ENCODE measurements at regions of chr3 and their contacts with region 1.

Region 1: DNA sequence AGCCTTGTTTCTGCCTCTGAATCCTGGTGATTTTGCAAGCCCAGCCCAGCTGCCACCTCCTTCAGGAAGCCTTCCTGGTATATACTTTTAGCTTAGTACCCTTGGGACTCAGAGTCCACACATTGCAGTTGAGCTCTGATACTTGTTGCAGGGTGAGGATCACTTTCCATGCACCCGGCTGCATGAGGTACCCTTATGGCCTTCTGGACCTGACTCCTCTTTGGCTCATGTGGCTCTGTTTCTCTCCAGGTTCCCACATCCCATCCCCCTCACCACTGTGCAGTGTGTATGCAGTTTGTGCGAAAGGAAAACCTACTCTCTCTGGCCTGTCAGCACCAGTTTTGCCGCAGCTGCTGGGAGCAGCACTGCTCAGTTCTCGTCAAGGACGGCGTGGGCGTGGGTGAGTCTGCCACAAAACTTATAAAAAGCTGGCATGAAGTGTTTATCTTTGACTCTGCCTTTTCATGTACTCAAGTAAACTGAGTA is 23.1 kb upstream of the P4HTM start:
- DNase-seq: no peak
- ATAC-seq: peak in 3 of 4 donors; percentile 38 to 42 (median 41)
- H3K4me3 ChIP-seq: no peak overlapping the region
- H3K27ac ChIP-seq: no peak overlapping the region
- H3K4me1 ChIP-seq: no peaks in the 10 kb centered on the region
- H3K27me3 ChIP-seq: no peaks in the 10 kb centered on the region
- CTCF ChIP-seq: no peak
- POLR2A ChIP-seq: no peak

Region 2: DNA sequence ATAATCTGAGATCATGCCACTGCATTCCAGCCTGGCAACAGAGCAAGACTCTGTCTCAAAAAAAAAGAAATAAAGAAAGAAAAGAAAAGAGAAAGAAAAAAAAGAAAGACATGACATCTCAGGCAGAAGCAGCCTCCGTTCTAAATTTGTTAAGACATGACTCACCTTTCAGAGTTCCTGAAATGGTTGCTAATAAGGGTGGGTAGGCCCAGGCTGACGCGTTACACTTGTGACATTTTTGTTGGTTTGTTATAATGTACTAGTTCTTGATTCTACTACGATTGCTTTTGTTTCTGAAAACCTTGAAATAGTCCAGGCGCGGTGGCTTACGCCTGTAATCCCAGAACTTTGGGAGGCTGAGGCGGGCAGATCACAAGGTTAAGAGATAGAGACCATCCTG is 89.2 kb before region 1 on chr3:
- intact Hi-C with region 1: loop called in 1 of 10 experiments (anchors 10 kb)
- DNase-seq: no peak
- ATAC-seq: no peak
- H3K4me3 ChIP-seq: no peak overlapping the region
- H3K27ac ChIP-seq: no peak overlapping the region
- H3K4me1 ChIP-seq: peaks cover 0 to 18% (median 6%) of the 10 kb centered on the region in 12 donors
- H3K27me3 ChIP-seq: no peaks in the 10 kb centered on the region
- CTCF ChIP-seq: no peak
- POLR2A ChIP-seq: no peak

Region 3: DNA sequence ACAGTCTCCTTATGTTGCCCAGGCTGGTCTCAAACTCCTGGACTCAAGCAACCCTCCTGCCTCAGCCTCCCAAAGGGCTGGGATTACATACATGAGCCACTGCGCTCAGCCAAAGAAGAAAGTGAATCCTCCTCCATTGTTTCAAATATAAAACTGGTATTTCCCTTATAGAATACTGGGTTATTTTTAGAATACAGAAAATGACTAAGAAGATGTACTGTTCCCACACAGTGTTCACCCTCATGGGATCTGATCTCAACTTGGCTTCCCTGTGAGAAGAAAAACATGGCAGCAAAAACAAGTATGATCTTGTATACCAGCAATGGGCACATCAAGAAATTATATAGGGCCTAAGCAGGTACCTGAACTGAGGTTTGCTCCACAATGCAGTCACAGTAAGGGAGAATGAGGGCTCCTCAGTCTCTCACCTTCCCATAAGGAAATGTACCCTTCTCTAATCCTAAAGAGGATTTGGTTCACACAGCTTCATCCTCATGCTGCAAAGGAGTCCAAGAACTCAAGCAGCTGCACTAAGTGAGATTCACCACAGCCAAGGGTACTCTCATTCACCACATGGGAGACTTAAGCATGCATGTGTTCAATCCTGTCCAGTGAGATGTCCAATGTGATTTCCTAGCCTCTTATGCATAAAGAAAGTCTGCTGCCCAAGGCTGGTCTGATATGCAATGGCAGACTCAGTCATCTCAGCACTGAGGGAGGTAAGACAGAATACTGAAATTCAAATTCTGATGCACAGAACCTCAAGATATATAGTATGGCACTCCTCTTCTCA is 347.2 kb after region 1 on chr3:
- intact Hi-C with region 1: loop called in 1 of 10 experiments (anchors 10 kb)
- DNase-seq: no peak
- ATAC-seq: no peak
- H3K4me3 ChIP-seq: no peak overlapping the region
- H3K27ac ChIP-seq: no peak overlapping the region
- H3K4me1 ChIP-seq: peaks cover 0 to 8% (median 0%) of the 10 kb centered on the region in 12 donors
- H3K27me3 ChIP-seq: no peaks in the 10 kb centered on the region
- CTCF ChIP-seq: no peak
- POLR2A ChIP-seq: no peak

Measured in heart left ventricle (tissue), 16 donors.